GM12878 (cell line): ENCODE measurements at regions of chr12 and their contacts with region 1.

Region 1: GRCh38 chr12:13211859-13212664 is 15.5 kb downstream of the EMP1 start:
- DNase-seq: no peak
- ATAC-seq: peak; percentile 72
- H3K4me3 ChIP-seq: no peak overlapping the region
- H3K27ac ChIP-seq: no peak overlapping the region
- H3K4me1 ChIP-seq: no peaks in the 10 kb centered on the region
- H3K27me3 ChIP-seq: peaks cover 0 to 9% of the 10 kb centered on the region in 2 experiments; a peak in 2 of 4 replicates
- CTCF ChIP-seq: peak; percentile 71 to 93 (median 87)
- EP300 ChIP-seq: no peak
- POLR2A ChIP-seq: no peak
- RAD21 ChIP-seq: peak; percentile 91

Region 2: DNA sequence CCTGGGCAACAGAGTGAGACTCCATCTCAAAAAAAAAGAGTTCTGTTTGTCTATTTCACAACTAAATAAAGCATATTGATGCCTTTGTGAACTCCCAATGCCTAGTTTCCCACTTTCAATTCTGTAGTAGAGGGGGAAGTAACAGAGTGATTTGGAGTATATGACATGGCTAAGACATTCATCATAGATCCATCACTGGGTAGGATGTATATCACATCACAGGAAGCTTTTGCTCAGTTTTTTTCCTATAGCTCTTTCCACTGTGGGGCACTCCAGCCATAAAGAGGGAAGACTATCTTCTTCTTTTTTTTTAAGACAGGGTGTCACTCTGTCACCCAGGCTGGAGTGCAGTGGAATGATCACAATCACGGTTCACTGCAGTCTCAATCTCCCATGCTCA is 1295.3 kb before region 1 on chr12:
- CTCF ChIA-PET with region 1: no interaction called
- POLR2A ChIA-PET with region 1: no interaction called
- RAD21 ChIA-PET with region 1: no interaction called
- SMC1A ChIA-PET with region 1: no interaction called
- in situ Hi-C with region 1: no loop called
- intact Hi-C with region 1: no loop called
- DNase-seq: no peak
- ATAC-seq: no peak
- H3K4me3 ChIP-seq: no peak overlapping the region
- H3K27ac ChIP-seq: no peak overlapping the region
- H3K4me1 ChIP-seq: no peaks in the 10 kb centered on the region
- H3K27me3 ChIP-seq: no peaks in the 10 kb centered on the region
- CTCF ChIP-seq: no peak
- EP300 ChIP-seq: no peak
- POLR2A ChIP-seq: no peak
- RAD21 ChIP-seq: no peak

Region 3: DNA sequence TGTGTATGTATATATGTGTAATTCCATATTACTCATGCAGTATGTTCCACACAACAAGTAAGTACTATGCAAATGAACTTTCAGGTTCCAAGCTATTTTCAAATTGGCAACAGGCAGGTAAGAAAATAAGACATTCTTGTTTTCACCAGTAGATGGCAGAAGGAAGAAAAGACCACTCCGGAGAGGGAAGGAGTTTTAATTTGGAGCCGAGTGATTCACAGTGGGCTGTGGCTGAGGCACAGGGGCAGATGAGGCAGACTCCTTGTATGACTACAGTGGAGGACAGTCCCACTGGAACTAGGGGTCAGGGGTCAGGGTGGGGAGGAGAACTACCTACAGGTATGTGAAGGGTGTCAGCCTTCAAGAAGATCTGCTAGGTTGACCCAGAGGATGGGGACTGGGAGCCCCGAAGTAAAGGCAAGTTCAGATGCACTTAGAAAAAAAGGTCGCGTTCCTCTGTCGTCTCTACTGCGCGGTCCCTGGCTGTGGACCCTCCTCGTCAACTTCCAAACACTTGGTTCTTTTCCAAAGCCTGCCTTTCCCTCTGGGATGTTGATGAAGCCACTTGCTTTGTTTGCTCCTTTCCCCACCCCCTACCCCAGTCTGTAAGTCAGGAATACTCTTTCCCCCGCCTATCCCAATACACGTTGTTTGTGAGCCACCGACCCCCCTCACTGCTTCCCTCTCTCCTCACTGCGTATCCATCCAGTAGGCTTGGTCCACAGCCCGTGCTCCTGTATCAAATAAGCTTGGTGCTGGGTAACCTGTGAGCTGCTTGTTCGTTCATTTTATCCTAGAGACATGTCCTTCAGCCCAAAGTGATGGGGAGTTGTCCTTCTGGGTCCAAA is 374.8 kb before region 1 on chr12:
- CTCF ChIA-PET with region 1: interaction called, 12 read pairs
- POLR2A ChIA-PET with region 1: no interaction called
- RAD21 ChIA-PET with region 1: interaction called, 5 read pairs
- SMC1A ChIA-PET with region 1: no interaction called
- in situ Hi-C with region 1: no loop called
- intact Hi-C with region 1: no loop called
- DNase-seq: no peak
- ATAC-seq: peak; percentile 77
- H3K4me3 ChIP-seq: no peak overlapping the region
- H3K27ac ChIP-seq: no peak overlapping the region
- H3K4me1 ChIP-seq: no peaks in the 10 kb centered on the region; the same call in 1 of the 2 replicates
- H3K27me3 ChIP-seq: no peaks in the 10 kb centered on the region
- CTCF ChIP-seq: peak; percentile 37 to 52 (median 43); a peak in 5 of 6 replicates
- EP300 ChIP-seq: no peak
- POLR2A ChIP-seq: no peak
- RAD21 ChIP-seq: peak; percentile 35; the same call in 1 of the 2 replicates

Region 4: GRCh38 chr12:12909995-12910391 is 302.1 kb before region 1 on chr12:
- CTCF ChIA-PET with region 1: interaction called, 105 read pairs
- POLR2A ChIA-PET with region 1: no interaction called
- RAD21 ChIA-PET with region 1: interaction called, 21 read pairs
- SMC1A ChIA-PET with region 1: interaction called, 50 read pairs
- in situ Hi-C with region 1: loop called (anchors 5 kb)
- intact Hi-C with region 1: no loop called
- DNase-seq: no peak
- ATAC-seq: no peak
- H3K4me3 ChIP-seq: no peak overlapping the region
- H3K27ac ChIP-seq: no peak overlapping the region
- H3K4me1 ChIP-seq: peaks cover 5% of the 10 kb centered on the region; the same call in 1 of the 2 replicates
- H3K27me3 ChIP-seq: no peaks in the 10 kb centered on the region; a peak in 1 of 4 replicates
- CTCF ChIP-seq: no peak
- EP300 ChIP-seq: no peak
- POLR2A ChIP-seq: no peak
- RAD21 ChIP-seq: no peak

Region 5: DNA sequence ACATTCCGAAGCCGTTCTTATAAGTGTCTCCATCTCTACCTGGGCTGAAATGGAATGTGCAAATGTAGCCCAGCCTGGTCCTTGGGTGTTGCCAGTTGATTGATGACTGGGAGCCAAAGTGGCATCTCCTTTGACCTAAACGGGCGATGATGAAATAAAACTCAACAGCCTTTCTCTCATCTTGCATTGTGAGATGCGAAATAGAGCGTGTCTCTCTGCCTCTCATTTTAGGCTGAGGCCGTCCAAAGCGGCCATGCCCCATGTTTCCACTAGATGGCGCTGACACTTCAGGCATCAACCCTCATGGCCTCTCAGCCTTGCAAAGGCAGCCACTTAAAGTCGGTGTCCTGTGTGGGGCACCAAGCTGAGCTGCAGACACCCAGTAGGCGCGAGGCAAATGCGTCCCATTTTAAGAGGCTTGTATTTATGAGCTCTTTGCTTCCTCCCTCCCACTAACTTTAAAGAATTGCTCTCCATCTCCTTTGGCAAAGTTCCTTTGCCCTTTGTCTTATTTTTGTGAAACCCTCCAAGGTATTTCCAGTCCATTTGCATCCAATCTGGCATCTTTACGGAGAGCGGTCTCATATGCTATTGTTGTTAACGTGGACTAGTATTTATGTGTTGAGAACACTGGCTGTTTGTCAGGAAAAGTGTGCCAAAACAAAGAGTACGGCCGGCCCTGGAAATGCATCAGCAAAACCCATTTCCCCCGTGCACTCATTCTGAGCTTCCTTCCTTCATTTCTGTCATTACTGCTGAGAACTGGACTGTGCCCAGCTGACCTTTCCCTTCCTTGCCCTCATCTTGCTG is 295.7 kb before region 1 on chr12:
- CTCF ChIA-PET with region 1: interaction called, 105 read pairs
- POLR2A ChIA-PET with region 1: no interaction called
- RAD21 ChIA-PET with region 1: interaction called, 21 read pairs
- SMC1A ChIA-PET with region 1: interaction called, 50 read pairs
- in situ Hi-C with region 1: loop called (anchors 5 kb)
- intact Hi-C with region 1: loop called (anchors 1 kb)
- DNase-seq: no peak
- ATAC-seq: peak; percentile 99
- H3K4me3 ChIP-seq: no peak overlapping the region
- H3K27ac ChIP-seq: no peak overlapping the region
- H3K4me1 ChIP-seq: no peaks in the 10 kb centered on the region
- H3K27me3 ChIP-seq: peaks cover 2 to 3% of the 10 kb centered on the region in 2 experiments; a peak in 2 of 4 replicates
- CTCF ChIP-seq: peak; percentile 96 to 99 (median 99); a peak in 5 of 6 replicates
- EP300 ChIP-seq: no peak
- POLR2A ChIP-seq: no peak
- RAD21 ChIP-seq: peak; percentile 98

Region 6: DNA sequence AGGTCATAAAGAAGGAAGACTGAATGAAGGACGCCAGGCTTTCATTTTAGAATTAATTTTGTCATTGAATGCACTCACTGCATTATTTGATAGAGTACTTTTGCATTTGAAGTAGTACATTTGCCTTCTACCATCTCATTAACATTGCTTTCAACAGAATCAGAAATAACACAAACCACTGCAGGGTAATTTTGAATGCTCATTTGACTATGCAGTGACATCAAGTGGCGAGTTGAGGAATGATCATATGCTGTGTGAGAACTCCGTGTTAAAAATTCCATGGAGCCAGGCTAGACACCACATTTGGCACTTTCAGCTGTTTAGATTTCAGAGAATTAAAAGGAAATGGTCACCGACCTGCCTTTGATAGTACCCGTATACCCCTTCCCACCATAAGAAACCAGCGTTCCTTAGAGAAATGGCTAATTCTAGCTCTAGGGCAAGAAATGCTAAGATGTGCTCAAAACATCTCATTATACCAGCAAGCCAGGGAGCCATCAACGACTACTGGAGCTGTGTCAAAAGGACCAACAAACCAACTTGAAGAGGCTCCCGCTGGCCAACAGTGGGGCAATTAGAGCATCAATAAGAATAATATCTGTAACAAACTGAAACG is 228.5 kb before region 1 on chr12:
- CTCF ChIA-PET with region 1: interaction called, 20 read pairs
- POLR2A ChIA-PET with region 1: no interaction called
- RAD21 ChIA-PET with region 1: no interaction called
- SMC1A ChIA-PET with region 1: interaction called, 9 read pairs
- in situ Hi-C with region 1: no loop called
- intact Hi-C with region 1: loop called (anchors 10 kb)
- DNase-seq: no peak
- ATAC-seq: peak; percentile 71
- H3K4me3 ChIP-seq: no peak overlapping the region
- H3K27ac ChIP-seq: no peak overlapping the region
- H3K4me1 ChIP-seq: no peaks in the 10 kb centered on the region
- H3K27me3 ChIP-seq: peaks cover 0 to 3% of the 10 kb centered on the region in 2 experiments; a peak in 2 of 4 replicates
- CTCF ChIP-seq: peak; percentile 38 to 41 (median 41); a peak in 5 of 6 replicates
- EP300 ChIP-seq: no peak
- POLR2A ChIP-seq: no peak
- RAD21 ChIP-seq: peak; percentile 57

Region 7: DNA sequence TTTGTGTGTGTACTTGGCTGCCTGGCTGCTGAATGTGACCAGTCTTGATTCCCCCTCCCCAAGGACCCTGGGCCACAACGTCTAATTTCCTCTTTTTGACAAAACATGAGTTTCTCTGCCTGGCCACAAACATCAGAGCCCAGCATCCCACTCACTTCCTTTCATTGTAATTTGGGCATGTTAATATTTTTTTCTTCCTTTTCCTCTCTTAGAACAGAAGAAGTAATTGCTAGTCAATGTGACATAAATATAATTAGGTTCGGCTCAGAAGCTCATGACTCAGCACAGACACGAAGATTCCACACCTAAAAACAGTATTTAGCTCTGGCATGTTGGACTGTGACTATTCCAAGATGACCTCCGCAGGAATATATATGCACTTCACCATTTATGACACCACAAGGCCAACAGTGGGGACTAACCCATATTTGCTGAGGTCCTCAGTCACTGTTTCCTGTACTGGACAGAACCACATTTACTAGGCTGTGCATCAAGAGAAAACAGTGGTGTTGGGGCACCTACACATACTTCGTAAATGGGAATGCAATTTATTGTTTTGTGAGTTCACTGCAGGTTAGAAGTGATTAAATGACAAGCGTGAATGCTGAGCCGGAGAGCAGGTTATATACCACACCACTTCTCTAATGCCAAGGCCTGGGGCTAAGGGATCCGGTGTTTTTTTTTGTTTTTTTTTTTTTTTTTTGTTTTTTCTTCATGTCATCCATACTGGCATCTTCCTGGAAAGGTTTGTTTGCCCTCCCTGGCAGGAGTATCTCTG is 112.8 kb before region 1 on chr12:
- CTCF ChIA-PET with region 1: interaction called, 7 read pairs
- POLR2A ChIA-PET with region 1: no interaction called
- RAD21 ChIA-PET with region 1: interaction called, 5 read pairs
- SMC1A ChIA-PET with region 1: interaction called, 5 read pairs
- in situ Hi-C with region 1: no loop called
- intact Hi-C with region 1: loop called (anchors 2 kb)
- DNase-seq: no peak
- ATAC-seq: no peak
- H3K4me3 ChIP-seq: no peak overlapping the region
- H3K27ac ChIP-seq: no peak overlapping the region
- H3K4me1 ChIP-seq: peaks cover 19% of the 10 kb centered on the region; the same call in 1 of the 2 replicates
- H3K27me3 ChIP-seq: peaks cover 2 to 9% of the 10 kb centered on the region in 2 experiments; a peak in 3 of 4 replicates
- CTCF ChIP-seq: no peak
- EP300 ChIP-seq: no peak
- POLR2A ChIP-seq: no peak
- RAD21 ChIP-seq: no peak

Region 8: GRCh38 chr12:13222076-13222475 is 10.0 kb after region 1 on chr12:
- CTCF ChIA-PET with region 1: interaction called, 13 read pairs
- POLR2A ChIA-PET with region 1: no interaction called
- RAD21 ChIA-PET with region 1: interaction called, 4 read pairs
- SMC1A ChIA-PET with region 1: no interaction called
- in situ Hi-C with region 1: no loop called
- intact Hi-C with region 1: no loop called
- DNase-seq: no peak
- ATAC-seq: no peak
- H3K4me3 ChIP-seq: no peak overlapping the region
- H3K27ac ChIP-seq: no peak overlapping the region
- H3K4me1 ChIP-seq: no peaks in the 10 kb centered on the region
- H3K27me3 ChIP-seq: peaks cover 0 to 2% of the 10 kb centered on the region in 2 experiments; a peak in 3 of 4 replicates
- CTCF ChIP-seq: no peak
- EP300 ChIP-seq: no peak
- POLR2A ChIP-seq: no peak
- RAD21 ChIP-seq: no peak